Mammary epithelial cell (primary cell): ENCODE measurements at regions of chr11 and their contacts with region 1.

Region 1: DNA sequence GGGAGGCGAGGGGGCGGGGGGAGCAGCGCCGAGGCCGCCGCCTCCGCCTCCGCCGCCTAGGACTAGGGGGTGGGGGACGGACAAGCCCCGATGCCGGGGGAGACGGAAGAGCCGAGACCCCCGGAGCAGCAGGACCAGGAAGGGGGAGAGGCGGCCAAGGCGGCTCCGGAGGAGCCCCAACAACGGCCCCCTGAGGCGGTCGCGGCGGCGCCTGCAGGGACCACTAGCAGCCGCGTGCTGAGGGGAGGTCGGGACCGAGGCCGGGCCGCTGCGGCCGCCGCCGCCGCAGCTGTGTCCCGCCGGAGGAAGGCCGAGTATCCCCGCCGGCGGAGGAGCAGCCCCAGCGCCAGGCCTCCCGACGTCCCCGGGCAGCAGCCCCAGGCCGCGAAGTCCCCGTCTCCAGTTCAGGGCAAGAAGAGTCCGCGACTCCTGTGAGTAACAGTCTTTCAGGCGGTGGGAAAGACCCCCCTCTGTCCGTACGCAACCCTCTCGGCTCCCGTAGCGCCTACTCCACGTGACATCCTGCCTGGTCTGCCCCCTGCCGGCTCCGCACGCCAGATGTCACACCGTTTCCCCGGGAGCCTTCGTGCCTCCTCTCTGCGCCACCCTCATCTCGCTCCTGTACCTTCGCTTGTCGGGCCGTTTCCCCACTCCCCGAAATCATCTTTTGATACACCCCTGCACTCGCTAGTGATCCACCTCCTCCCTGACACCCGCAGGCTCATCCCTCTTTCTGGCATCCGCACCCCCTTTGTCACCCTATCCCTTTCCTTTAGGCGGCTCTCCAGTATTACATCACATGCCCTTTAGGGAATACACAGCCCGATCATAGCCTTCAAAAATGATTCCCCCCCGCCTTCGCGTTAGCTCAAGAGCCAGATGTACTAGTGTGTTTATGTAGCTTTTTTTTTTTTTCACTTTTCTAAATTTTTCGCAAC is 598 bp downstream of the ZFP91 start:
- DNase-seq: peak; percentile 86
- H3K4me3 ChIP-seq: peak overlapping the region; percentile 80 to 91 (median 88)
- H3K27ac ChIP-seq: peak overlapping the region; percentile 88
- H3K4me1 ChIP-seq: peaks cover 36% of the 10 kb centered on the region
- H3K27me3 ChIP-seq: no peaks in the 10 kb centered on the region
- CTCF ChIP-seq: peak; percentile 63 to 82

Region 2: DNA sequence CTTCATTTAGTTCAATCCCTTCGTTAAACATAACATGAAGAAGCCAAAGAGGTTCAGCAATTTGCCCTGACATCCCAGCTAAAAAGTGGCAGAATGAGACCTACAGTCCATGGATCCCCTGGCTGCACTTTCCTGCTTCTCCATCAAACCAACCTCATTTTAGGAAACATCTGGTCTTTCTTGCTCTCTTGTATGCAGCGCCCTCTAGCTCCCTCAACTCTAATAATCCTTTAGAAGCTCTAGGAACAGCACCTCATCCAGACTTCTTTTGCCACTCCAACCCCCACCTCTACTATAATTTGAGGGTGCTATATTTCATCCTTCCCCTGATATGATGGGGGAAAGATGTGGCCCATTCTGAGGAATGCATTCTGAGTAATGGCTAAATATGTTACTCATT is 50.4 kb after region 1 on chr11:
- CTCF ChIA-PET with region 1: interaction called, 6 read pairs
- dilution Hi-C with region 1: no loop called
- in situ Hi-C with region 1: no loop called
- intact Hi-C with region 1: loop called (anchors 1 kb)
- DNase-seq: peak; percentile 42
- H3K4me3 ChIP-seq: no peak overlapping the region
- H3K27ac ChIP-seq: no peak overlapping the region
- H3K4me1 ChIP-seq: peaks cover 32% of the 10 kb centered on the region
- H3K27me3 ChIP-seq: no peaks in the 10 kb centered on the region
- CTCF ChIP-seq: peak; percentile 43 to 72

Region 3: DNA sequence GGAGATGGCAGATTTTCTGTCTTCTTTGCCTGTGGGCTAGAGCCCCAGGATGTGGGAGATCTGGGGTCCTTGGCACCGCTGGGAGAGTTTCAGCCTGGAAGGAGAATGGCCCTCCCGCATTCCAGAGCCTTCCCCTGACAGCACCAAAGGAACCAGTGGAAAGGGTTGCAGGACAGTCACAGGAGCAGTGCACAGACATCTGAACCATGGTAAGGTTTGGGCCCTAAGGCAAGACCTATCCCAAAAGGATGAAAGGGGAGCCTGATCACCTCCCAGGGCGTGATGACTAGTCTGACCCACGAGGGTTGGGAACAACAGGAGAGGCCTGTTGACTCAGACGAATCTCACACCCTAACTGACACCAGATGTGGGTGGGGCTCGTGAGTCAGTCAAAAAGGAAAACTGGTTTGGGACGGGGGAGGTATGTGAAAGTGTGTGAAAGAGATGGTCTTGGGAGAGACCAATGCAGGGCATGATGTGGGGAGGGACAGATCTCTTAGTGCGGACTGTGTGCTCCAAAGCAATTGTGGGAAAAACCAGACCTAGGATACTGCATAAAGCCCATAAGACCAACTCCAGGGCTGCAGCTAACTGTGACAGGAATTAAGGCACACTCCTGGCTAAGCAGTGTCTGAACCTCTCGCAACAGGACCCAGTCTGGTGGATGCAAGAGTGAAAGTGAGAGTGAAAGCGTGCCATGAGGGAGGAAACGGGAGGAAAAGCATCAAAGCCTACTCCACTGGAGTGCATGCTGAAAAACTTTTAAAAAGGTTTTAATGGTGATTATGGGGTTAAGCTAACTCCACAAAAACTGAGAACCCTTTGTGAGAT is 191.4 kb after region 1 on chr11:
- CTCF ChIA-PET with region 1: no interaction called
- dilution Hi-C with region 1: no loop called
- in situ Hi-C with region 1: no loop called
- intact Hi-C with region 1: loop called (anchors 5 kb)
- DNase-seq: peak; percentile 98
- H3K4me3 ChIP-seq: no peak overlapping the region
- H3K27ac ChIP-seq: peak overlapping the region; percentile 48
- H3K4me1 ChIP-seq: peaks cover 20% of the 10 kb centered on the region
- H3K27me3 ChIP-seq: no peaks in the 10 kb centered on the region
- CTCF ChIP-seq: no peak

Region 4: DNA sequence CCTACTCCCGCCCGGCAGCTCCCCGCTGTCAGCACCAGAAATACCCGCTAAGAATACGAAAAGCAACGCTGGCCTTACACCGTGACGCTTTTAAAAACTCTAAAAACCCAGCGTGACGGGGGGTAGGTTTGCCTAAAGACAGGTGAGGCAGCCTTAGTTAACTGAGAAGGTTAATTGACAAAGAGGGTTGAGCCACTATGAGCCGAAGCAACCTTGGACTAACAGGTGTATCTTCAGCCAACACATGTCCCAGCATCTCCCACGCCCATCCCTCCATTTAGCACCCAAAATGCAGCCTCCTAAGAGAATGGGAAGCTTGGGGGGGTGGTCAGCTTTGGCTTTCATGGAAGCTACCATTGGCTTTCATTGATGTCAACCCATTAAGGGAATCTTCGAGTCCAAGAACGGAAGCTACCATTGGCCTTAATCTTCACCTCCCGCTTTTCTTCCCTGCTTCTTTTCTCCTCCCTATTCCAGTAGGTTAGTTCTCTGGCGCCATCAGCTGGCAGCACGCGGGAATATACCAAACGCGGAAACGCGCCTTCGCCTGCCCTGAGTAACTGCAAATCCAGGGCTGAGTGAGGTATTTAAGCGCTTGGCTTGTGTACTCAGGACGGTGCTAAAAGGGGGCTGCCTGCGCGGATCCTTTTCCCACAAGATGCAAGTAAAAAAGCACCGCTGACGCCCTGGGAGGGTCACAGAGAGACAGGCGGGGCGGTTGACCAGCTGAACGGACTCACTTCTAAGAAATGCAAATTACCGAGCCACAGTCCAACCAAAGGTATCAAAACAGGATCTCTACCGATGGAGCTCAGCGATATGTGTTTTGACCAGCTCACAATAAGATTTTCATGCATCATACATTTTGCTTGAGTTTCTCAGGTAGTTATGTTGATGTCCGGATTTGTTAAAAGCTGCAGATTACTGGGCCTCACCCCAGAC is 321.3 kb after region 1 on chr11:
- CTCF ChIA-PET with region 1: interaction called, 19 read pairs
- dilution Hi-C with region 1: no loop called
- in situ Hi-C with region 1: no loop called
- intact Hi-C with region 1: loop called (anchors 1 kb)
- DNase-seq: peak; percentile 85
- H3K4me3 ChIP-seq: peak overlapping the region in 2 of 3 experiments; percentile 1 to 27
- H3K27ac ChIP-seq: no peak overlapping the region
- H3K4me1 ChIP-seq: peaks cover 20% of the 10 kb centered on the region
- H3K27me3 ChIP-seq: no peaks in the 10 kb centered on the region
- CTCF ChIP-seq: peak; percentile 80 to 86

Region 5: GRCh38 chr11:59053387-59053786 is 473.9 kb after region 1 on chr11:
- CTCF ChIA-PET with region 1: no interaction called
- dilution Hi-C with region 1: no loop called
- in situ Hi-C with region 1: no loop called
- intact Hi-C with region 1: loop called (anchors 2 kb)
- DNase-seq: peak; percentile 25
- H3K4me3 ChIP-seq: no peak overlapping the region
- H3K27ac ChIP-seq: no peak overlapping the region
- H3K4me1 ChIP-seq: no peaks in the 10 kb centered on the region
- H3K27me3 ChIP-seq: peaks cover 4% of the 10 kb centered on the region
- CTCF ChIP-seq: peak; percentile 66 to 73

Region 6: DNA sequence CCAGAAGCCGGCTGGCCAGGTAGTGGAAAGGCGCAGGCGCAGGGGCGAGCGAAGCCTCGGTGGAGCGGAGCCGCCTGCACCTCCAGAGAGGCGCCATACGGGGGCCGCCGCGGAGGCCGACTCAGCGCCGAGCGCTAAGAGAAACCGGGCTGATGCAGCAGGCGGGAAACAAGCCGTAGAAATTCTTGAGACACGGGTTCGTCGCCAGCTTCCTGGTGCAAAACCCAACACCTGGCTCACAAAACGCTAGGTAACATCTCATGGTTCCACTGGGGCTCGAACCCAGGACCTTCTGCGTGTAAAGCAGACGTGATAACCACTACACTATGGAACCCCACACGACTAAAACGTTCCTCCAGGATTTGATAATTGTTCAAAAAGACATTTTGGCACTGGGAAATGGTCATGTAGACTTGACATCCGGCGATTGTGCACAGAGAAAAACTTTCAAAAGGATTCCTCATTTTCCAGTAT is 970.9 kb after region 1 on chr11:
- CTCF ChIA-PET with region 1: no interaction called
- dilution Hi-C with region 1: no loop called
- in situ Hi-C with region 1: no loop called
- intact Hi-C with region 1: loop called (anchors 5 kb)
- DNase-seq: peak; percentile 97
- H3K4me3 ChIP-seq: peak overlapping the region; percentile 51 to 69 (median 62)
- H3K27ac ChIP-seq: peak overlapping the region; percentile 52
- H3K4me1 ChIP-seq: peaks cover 9% of the 10 kb centered on the region
- H3K27me3 ChIP-seq: no peaks in the 10 kb centered on the region
- CTCF ChIP-seq: peak; percentile 28 to 62